Heart left ventricle (tissue), 16 donors: ENCODE measurements at regions of chr21 and their contacts with region 1.

Region 1: GRCh38 chr21:37582590-37582989 is 216.0 kb downstream of the DYRK1A start:
- DNase-seq: no peak
- ATAC-seq: peak; percentile 47 to 85 (median 74)
- H3K4me3 ChIP-seq: no peak overlapping the region
- H3K27ac ChIP-seq: no peak overlapping the region
- H3K4me1 ChIP-seq: peaks cover 0 to 4% (median 0%) of the 10 kb centered on the region in 12 donors
- H3K27me3 ChIP-seq: no peaks in the 10 kb centered on the region
- CTCF ChIP-seq: peak; percentile 30 to 74 (median 64)
- POLR2A ChIP-seq: no peak

Region 2: DNA sequence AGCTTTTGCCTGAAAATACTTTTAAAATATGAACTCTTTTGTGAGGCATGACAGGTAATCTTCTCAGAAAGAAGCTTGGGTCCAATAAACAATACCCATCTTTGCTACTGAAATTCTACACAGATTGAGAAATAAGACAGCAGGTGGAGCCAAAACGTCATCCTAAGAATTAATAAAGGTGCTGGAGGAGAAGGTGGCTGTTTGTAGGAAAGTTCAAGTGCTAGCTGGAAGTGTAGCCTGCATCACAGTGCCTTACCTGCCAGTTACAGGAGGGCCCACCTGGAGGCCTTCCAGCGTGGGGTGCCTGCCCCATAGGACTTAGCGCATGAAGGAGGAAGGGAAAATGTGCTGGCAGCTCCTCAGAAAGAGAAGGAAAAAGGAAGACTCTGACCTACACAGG is 415.9 kb before region 1 on chr21:
- intact Hi-C with region 1: loop called in 2 of 10 experiments (anchors 10 kb)
- DNase-seq: no peak
- ATAC-seq: no peak
- H3K4me3 ChIP-seq: no peak overlapping the region
- H3K27ac ChIP-seq: no peak overlapping the region
- H3K4me1 ChIP-seq: peaks cover 0 to 12% (median 0%) of the 10 kb centered on the region in 12 donors
- H3K27me3 ChIP-seq: no peaks in the 10 kb centered on the region
- CTCF ChIP-seq: peak in 9 of 12 donors; percentile 7 to 38 (median 22)
- POLR2A ChIP-seq: no peak

Region 3: GRCh38 chr21:37220981-37221664 is 361.5 kb before region 1 on chr21:
- intact Hi-C with region 1: loop called in 4 of 10 experiments (anchors 5 to 10 kb)
- DNase-seq: peak; percentile 95 to 97 (median 97)
- ATAC-seq: peak; percentile 96 to 98 (median 96)
- H3K4me3 ChIP-seq: peak overlapping the region; percentile 38 to 84 (median 70)
- H3K27ac ChIP-seq: peak overlapping the region; percentile 71 to 94 (median 86)
- H3K4me1 ChIP-seq: peaks cover 0 to 18% (median 10%) of the 10 kb centered on the region in 12 donors
- H3K27me3 ChIP-seq: no peaks in the 10 kb centered on the region
- CTCF ChIP-seq: peak; percentile 2 to 76 (median 50)
- POLR2A ChIP-seq: peak in 1 of 2 donors; percentile 65

Region 4: GRCh38 chr21:37484535-37485474 is 97.8 kb before region 1 on chr21:
- intact Hi-C with region 1: no loop called
- DNase-seq: no peak
- ATAC-seq: peak; percentile 36 to 65 (median 58)
- H3K4me3 ChIP-seq: no peak overlapping the region
- H3K27ac ChIP-seq: peak overlapping the region in 1 of 12 donors; percentile 37
- H3K4me1 ChIP-seq: peaks cover 0 to 17% (median 5%) of the 10 kb centered on the region in 12 donors
- H3K27me3 ChIP-seq: no peaks in the 10 kb centered on the region
- CTCF ChIP-seq: no peak
- POLR2A ChIP-seq: no peak

Region 5: GRCh38 chr21:37496972-37497371 is 85.6 kb before region 1 on chr21:
- intact Hi-C with region 1: loop called in 1 of 10 experiments (anchors 5 kb)
- DNase-seq: no peak
- ATAC-seq: no peak
- H3K4me3 ChIP-seq: no peak overlapping the region
- H3K27ac ChIP-seq: peak overlapping the region in 2 of 12 donors; percentile 4 to 36
- H3K4me1 ChIP-seq: peaks cover 0 to 2% (median 0%) of the 10 kb centered on the region in 12 donors
- H3K27me3 ChIP-seq: no peaks in the 10 kb centered on the region
- CTCF ChIP-seq: peak in 8 of 12 donors; percentile 29 to 43 (median 34)
- POLR2A ChIP-seq: no peak

Region 6: GRCh38 chr21:37557261-37557950 is 25.2 kb before region 1 on chr21:
- intact Hi-C with region 1: no loop called
- DNase-seq: no peak
- ATAC-seq: no peak
- H3K4me3 ChIP-seq: peak overlapping the region in 2 of 12 donors; percentile 6 to 22
- H3K27ac ChIP-seq: peak overlapping the region in 8 of 12 donors; percentile 25 to 87 (median 40)
- H3K4me1 ChIP-seq: peaks cover 0 to 26% (median 9%) of the 10 kb centered on the region in 12 donors
- H3K27me3 ChIP-seq: no peaks in the 10 kb centered on the region
- CTCF ChIP-seq: no peak
- POLR2A ChIP-seq: no peak